ENCODE measurements at regions of chr1 and their contacts with region 1.

Region 1: GRCh38 chr1:219244864-219245263 is 71.2 kb downstream of the LYPLAL1 start:
- DNase-seq: no peak
- ATAC-seq: no peak
- H3K4me3 ChIP-seq: no peak overlapping the region
- H3K4me3 Mint-ChIP-seq: no peak overlapping the region
- H3K27ac ChIP-seq: no peak overlapping the region
- H3K27ac Mint-ChIP-seq: no peak overlapping the region
- H3K4me1 ChIP-seq: no peaks in the 10 kb centered on the region
- H3K4me1 Mint-ChIP-seq: no peaks in the 10 kb centered on the region
- H3K27me3 ChIP-seq: no peaks in the 10 kb centered on the region
- H3K27me3 Mint-ChIP-seq: no peaks in the 10 kb centered on the region

Region 2: DNA sequence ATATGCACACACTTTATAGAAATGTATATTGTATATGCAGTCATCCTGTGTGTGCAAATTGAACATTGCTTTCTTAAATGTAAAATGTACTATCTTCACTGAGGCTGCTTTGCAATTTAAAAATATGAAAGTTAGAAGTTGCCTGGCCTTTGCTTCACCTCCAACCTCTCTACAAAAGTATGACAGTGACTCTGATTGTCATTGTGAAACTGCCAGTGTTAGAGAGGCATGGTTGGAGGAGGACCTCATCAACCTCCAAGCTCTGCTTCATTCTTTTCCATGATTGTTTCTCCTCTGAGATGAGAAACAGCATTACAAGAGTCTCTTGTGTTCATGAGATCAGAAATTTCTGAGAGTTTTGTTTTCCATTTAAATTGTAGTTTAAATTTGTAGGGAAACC is 182.5 kb after region 1 on chr1:
- CTCF ChIA-PET with region 1: interaction called in 1 of 2 experiments, 12 read pairs
- POLR2A ChIA-PET with region 1: no interaction called
- DNase-seq: no peak
- ATAC-seq: no peak
- H3K4me3 ChIP-seq: no peak overlapping the region
- H3K4me3 Mint-ChIP-seq: no peak overlapping the region
- H3K27ac ChIP-seq: no peak overlapping the region
- H3K27ac Mint-ChIP-seq: no peak overlapping the region
- H3K4me1 ChIP-seq: no peaks in the 10 kb centered on the region
- H3K4me1 Mint-ChIP-seq: no peaks in the 10 kb centered on the region
- H3K27me3 ChIP-seq: no peaks in the 10 kb centered on the region
- H3K27me3 Mint-ChIP-seq: peaks cover 0 to 3% of the 10 kb centered on the region in 2 donors

Region 3: DNA sequence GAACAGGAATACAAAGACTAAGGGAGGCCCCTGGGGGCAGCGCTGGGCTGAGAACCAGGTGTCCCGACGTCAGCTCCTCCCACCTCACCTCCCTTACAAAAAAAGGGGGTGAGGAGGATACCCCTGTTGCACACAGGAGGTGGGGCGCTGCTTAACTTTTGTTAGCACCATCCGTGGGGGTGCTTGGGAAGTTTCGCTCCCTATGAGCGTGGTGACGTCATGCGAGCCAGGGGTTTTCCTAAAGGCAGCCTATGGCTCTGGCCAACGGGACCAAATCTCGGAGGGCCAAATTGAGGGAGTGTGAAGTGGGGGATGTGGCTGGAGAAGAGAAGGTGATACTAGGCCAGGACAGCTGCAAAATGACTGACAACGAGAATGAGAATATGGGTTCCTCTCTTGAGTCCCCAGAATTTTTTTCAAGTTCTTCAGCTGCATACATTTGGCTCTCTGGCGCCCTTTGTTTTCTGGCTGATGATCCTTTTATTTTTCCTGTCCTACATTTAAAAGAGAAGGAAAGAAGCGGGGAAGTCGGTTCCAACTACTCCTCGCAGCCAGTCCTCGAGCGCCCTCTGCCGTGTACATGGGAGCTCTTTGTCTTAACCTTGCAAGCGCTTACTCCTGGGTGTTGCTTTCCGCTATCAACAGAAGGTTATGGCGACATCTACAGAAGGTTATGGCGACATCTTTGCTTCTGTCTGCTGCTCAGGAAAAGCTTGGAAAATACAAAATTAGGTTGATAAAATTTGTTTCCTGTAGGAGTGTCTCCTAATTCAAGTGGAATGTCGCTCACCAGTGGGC is 416.0 kb after region 1 on chr1:
- CTCF ChIA-PET with region 1: no interaction called
- POLR2A ChIA-PET with region 1: no interaction called
- DNase-seq: peak in 4 of 35 experiments; percentile 1 to 19 (median 4)
- ATAC-seq: no peak
- H3K4me3 ChIP-seq: no peak overlapping the region
- H3K4me3 Mint-ChIP-seq: no peak overlapping the region
- H3K27ac ChIP-seq: no peak overlapping the region
- H3K27ac Mint-ChIP-seq: no peak overlapping the region
- H3K4me1 ChIP-seq: no peaks in the 10 kb centered on the region
- H3K4me1 Mint-ChIP-seq: peaks cover 0 to 5% (median 5%) of the 10 kb centered on the region in 3 donors
- H3K27me3 ChIP-seq: peaks cover 2 to 4% of the 10 kb centered on the region in 2 experiments
- H3K27me3 Mint-ChIP-seq: peaks cover 24% of the 10 kb centered on the region in 2 donors

Measured in T-cell (primary cell).